ENCODE measurements at regions of chr9 and their contacts with region 1.

Region 1: GRCh38 chr9:125376351-125376776 is 114.7 kb downstream of the GAPVD1 start:
- DNase-seq: no peak
- H3K27ac ChIP-seq: no peak overlapping the region
- CTCF ChIP-seq: no peak

Region 2: GRCh38 chr9:125200210-125201047 is 175.9 kb before region 1 on chr9 and contains the start of gene RABEPK:
- CTCF ChIA-PET with region 1: interaction called, 11 read pairs
- POLR2A ChIA-PET with region 1: no interaction called
- DNase-seq: peak; percentile 98
- H3K27ac ChIP-seq: peak within 1 kb of the TSS; percentile 95
- CTCF ChIP-seq: no peak

Region 3: GRCh38 chr9:125878164-125878631 is 501.8 kb after region 1 on chr9:
- CTCF ChIA-PET with region 1: no interaction called
- POLR2A ChIA-PET with region 1: no interaction called
- DNase-seq: no peak
- H3K27ac ChIP-seq: no peak overlapping the region
- CTCF ChIP-seq: no peak

Measured in RWPE1 (cell line).